ENCODE measurements at regions of chr12 and their contacts with region 1.

Region 1: GRCh38 chr12:51232642-51233041 is 6.0 kb upstream of the DAZAP2 start:
- DNase-seq: no peak
- H3K4me3 ChIP-seq: no peak overlapping the region
- H3K27ac ChIP-seq: no peak overlapping the region
- H3K4me1 ChIP-seq: no peaks in the 10 kb centered on the region
- H3K27me3 ChIP-seq: no peaks in the 10 kb centered on the region
- CTCF ChIP-seq: no peak

Region 2: DNA sequence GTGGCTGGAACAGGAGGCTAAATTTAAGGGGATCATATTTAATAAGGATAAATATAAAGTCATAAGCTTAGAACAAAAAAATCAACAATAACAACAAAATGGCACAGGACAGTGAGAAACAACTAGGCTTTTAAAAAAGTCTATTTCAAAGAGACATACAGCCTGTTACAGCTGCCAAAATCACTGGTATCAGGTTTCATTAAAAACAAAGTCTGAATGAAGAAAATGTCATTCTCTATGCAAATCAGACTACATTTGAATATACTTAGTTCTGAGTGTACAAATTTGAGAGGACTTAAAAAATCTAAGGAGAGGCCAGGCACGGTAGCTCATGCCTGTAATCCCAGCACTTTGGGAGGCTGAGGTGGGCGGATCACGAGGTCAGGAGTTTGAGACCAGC is 103.7 kb before region 1 on chr12:
- CTCF ChIA-PET with region 1: no interaction called
- POLR2A ChIA-PET with region 1: interaction called, 11 read pairs
- intact Hi-C with region 1: no loop called
- DNase-seq: no peak
- H3K4me3 ChIP-seq: no peak overlapping the region
- H3K27ac ChIP-seq: no peak overlapping the region
- H3K4me1 ChIP-seq: no peaks in the 10 kb centered on the region
- H3K27me3 ChIP-seq: no peaks in the 10 kb centered on the region
- CTCF ChIP-seq: no peak

Measured in PC-9 (cell line).